Endothelial cell of umbilical vein (primary cell): ENCODE measurements at regions of chr18 and their contacts with region 1.

Region 1: DNA sequence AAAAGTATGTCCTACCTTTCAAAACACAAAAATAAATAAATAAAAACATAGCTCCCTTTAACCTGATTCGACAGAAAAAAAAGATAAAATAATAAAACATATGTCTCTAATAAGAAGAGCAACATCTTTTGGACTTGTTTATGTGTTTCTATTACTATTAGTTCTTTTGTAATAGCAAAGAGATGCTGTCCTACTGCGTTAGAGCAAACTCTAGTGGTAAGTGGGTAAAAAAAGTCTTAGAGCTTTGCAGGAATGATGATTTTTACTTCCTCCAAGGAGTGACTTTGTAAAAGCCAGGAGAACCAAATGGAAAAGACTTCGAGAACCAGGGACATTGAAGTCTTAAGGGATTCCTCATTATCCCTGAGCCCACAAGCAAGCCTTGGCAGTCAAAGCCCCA is 450.1 kb downstream of the METTL4 start:
- DNase-seq: no peak
- H3K4me3 ChIP-seq: no peak overlapping the region
- H3K27ac ChIP-seq: no peak overlapping the region
- H3K4me1 ChIP-seq: no peaks in the 10 kb centered on the region
- H3K27me3 ChIP-seq: peaks cover 0 to 3% of the 10 kb centered on the region in 2 experiments
- CTCF ChIP-seq: no peak
- POLR2A ChIP-seq: no peak

Region 2: GRCh38 chr18:2079742-2080141 is 41.5 kb before region 1 on chr18:
- CTCF ChIA-PET with region 1: no interaction called
- POLR2A ChIA-PET with region 1: no interaction called
- dilution Hi-C with region 1: no loop called
- intact Hi-C with region 1: no loop called
- DNase-seq: no peak
- H3K4me3 ChIP-seq: no peak overlapping the region
- H3K27ac ChIP-seq: no peak overlapping the region
- H3K4me1 ChIP-seq: no peaks in the 10 kb centered on the region
- H3K27me3 ChIP-seq: no peaks in the 10 kb centered on the region
- CTCF ChIP-seq: no peak
- POLR2A ChIP-seq: no peak

Region 3: GRCh38 chr18:2104620-2105462 is 16.4 kb before region 1 on chr18:
- CTCF ChIA-PET with region 1: interaction called, 26 read pairs
- POLR2A ChIA-PET with region 1: no interaction called
- dilution Hi-C with region 1: no loop called
- intact Hi-C with region 1: no loop called
- DNase-seq: peak; percentile 58
- H3K4me3 ChIP-seq: no peak overlapping the region
- H3K27ac ChIP-seq: no peak overlapping the region
- H3K4me1 ChIP-seq: no peaks in the 10 kb centered on the region
- H3K27me3 ChIP-seq: peaks cover 0 to 2% of the 10 kb centered on the region in 2 experiments
- CTCF ChIP-seq: peak; percentile 75 to 87
- POLR2A ChIP-seq: no peak